ENCODE measurements at regions of chr16 and their contacts with region 1.

Region 1: DNA sequence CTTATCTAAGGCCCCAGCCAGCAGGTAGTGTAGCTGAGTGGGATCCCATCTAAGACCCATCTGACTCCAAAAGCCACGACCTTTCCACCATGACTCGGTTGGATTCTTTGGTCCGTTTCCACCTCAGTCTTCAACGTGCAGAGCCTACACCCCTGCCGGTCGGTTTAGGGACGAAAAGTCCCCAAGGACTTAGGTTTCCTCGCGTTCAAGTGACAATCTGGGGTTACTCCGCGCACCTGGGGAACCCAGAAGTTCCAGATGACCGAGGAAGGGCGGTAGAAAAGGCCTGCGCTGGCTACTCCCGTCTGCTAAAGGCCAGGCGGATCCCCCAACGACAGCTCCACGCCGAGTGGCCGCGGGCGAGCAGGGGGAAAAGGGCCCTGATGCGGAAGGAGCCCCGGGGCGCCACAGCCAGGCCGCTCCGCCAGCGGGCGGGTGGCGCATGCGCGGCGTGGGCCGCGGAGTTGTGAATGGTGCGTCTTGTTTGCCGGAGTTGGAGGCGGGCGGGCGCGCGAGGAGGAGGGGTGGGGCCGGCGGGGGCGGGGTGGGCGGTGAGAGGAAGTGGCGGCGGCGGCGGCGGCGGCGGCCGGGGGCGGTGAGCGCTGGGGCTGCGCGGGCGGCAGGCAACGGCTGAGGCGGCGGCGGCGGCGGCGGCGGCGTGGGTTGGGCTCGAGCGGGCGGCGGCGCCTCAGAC is at the start of gene CBFB:
- DNase-seq: peak; percentile 97
- total RNA-seq, gene CBFB: 39.7 to 42.0 TPM

Region 2: DNA sequence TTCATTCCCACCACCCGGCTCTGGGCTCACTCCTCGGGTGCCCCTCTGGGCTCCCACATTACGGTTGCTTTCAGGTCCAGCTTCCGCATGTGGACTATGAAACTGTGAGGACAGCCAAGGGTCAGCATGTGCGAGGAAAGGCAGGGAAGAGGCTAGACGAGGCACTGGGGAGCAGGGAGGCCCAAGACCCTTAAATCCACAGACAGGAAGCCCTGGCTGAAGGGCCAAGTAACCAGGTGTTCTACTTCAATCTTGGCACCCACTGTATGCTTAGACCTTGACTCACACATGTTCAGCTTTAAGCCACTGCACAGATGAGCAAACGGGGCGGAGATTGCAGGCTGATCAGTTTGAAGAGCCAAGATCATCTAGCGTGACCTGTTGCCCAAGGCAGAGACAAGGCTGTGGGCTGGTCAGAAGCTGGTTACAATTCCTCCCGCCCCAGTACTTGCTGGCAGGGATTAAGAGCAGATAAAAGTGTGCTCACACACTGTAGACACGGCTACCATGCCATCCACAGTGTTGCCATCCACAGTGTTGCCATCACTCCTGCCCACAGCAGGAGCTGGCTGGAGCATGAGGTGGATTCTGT is 40.4 kb before region 1 on chr16 and contains the start of gene CES4A:
- intact Hi-C with region 1: loop called in 1 of 2 experiments (anchors 1 kb)
- DNase-seq: no peak
- total RNA-seq, gene CES4A: 2.8 to 7.4 TPM